Gastrocnemius medialis (tissue), 4 donors: ENCODE measurements at regions of chr11 and their contacts with region 1.

Region 1: DNA sequence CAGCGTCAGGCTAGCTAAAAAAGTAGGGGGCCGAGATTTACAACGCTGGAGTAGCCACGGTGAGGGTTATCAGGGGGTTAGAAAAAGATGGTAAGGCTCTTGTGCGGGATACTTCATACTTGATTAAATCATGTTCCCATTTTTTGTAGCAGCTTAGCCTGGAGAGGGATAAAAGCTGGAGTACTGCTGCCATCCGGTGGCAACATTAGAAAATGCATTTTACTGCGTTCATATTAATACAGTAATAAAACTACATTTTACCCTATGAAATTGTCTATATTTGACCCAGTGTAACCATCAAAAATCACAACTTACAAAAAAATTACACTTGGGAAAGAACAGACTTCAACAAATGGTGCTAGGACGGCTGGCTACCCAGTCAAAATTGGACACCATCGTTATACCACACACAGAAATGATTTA is 17.3 kb downstream of the RPUSD4 start:
- DNase-seq: no peak
- ATAC-seq: peak in 1 of 2 donors; percentile 21
- H3K4me3 ChIP-seq: no peak overlapping the region
- H3K27ac ChIP-seq: peak overlapping the region in 3 of 4 donors; percentile 36 to 93 (median 37)
- H3K4me1 ChIP-seq: peaks cover 48 to 64% of the 10 kb centered on the region in 2 donors
- H3K27me3 ChIP-seq: no peaks in the 10 kb centered on the region
- CTCF ChIP-seq: peak; percentile 62 to 73 (median 71)
- POLR2A ChIP-seq: no peak

Region 2: DNA sequence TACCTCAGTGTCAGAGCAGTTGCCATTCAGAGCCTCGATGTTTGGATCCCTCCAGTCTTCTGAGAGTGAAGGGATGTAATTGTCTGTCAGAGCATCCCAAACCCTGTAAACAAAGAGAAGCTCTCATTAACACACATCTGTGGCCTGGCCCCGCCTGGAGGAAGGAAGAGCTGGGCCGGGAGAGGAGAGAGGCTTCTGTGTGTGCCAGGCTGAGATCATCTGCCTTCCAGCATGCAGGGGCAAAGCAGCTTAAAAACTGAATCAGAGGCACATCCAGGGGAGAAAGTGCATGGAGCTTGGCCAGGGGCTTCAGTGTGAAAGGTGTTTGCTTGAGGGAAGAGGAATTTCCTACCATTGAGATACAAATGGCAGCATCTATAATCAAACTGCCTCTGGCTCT is 712.6 kb before region 1 on chr11:
- in situ Hi-C with region 1: no loop called
- intact Hi-C with region 1: no loop called
- DNase-seq: no peak
- ATAC-seq: no peak
- H3K4me3 ChIP-seq: no peak overlapping the region
- H3K27ac ChIP-seq: no peak overlapping the region
- H3K4me1 ChIP-seq: no peaks in the 10 kb centered on the region
- H3K27me3 ChIP-seq: no peaks in the 10 kb centered on the region
- CTCF ChIP-seq: no peak
- POLR2A ChIP-seq: no peak

Region 3: DNA sequence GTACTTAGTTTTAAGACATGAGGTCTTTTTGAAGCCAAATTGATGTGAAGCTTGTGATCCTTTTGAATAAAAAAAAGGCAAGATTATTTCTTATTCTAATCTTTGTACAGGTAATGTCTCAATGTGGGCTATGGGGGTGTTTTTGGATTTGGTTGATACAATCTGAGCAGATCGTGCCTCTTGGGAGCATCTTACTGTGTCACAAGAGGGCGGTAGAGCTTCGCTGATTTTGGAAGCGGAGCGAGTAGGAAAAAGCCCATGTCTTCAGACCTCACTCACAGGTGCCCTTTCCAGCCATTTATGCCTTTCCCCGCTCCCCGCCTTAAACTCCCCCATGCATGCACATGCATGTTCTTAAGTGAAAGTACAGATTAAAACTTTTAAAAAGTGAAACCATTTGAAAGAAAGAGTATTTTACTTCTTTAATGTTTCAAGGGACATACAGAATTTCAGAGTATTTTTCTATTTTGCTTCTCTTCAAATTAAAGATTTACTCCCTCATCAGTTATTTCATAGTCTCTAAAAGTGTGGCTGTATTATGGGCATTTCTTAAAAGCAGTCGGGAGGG is 271.0 kb before region 1 on chr11:
- in situ Hi-C with region 1: loop called in 3 of 4 experiments (anchors 5 kb)
- intact Hi-C with region 1: loop called (anchors 1 kb)
- DNase-seq: peak in 1 of 2 donors; percentile 44
- ATAC-seq: peak; percentile 91 to 93
- H3K4me3 ChIP-seq: no peak overlapping the region
- H3K27ac ChIP-seq: no peak overlapping the region
- H3K4me1 ChIP-seq: no peaks in the 10 kb centered on the region
- H3K27me3 ChIP-seq: peaks cover 0 to 3% (median 0%) of the 10 kb centered on the region in 3 donors
- CTCF ChIP-seq: peak; percentile 38 to 74 (median 64)
- POLR2A ChIP-seq: no peak

Region 4: DNA sequence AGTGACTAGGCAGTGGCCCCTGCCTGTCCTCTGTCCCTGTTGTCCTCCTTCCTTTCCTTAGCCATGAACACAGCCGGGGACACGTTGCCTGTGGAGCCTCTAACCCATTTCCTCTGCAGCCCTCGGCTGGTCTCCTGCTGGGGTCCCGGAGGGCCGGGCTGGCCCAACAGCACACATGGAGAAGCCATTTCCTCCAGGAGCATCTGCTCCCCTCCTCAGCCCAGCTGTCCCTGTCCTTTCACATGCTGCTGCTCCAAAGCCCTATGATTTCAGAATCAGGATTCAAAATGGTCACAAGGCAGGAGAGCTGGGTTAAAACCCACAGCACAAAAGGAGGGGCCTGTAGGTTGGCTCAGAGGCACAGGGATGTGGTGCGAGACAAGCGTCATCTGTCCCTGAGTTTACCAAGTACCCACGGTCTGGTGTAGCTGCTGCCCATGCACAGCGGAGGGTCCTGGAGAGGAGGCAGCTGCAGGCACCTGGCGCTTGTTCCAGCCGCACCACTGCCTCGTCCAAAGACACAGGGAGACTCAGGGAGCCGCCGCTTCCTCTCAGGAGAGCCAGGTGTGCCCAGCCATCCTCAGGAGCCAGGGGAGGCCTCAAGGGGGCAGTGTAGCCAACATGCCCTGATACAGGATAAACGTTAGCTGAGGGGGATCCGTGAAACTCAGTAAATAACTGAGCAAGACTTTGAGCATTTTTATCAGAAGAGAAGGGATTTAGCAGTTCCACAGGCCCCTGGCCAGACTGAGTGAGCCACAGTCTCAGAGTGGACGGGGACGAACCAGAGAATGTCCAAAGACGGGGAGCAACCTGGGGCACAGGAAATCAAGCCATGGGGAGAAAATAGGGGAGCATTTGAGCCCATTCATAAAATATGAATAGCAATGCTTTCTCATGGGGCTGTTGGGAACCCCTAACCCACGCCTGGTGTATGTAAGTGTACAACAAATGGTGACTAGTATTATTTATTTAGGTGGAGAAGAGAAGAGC is 252.2 kb before region 1 on chr11:
- in situ Hi-C with region 1: loop called in 1 of 4 experiments (anchors 10 kb)
- intact Hi-C with region 1: loop called (anchors 1 kb)
- DNase-seq: peak in 1 of 2 donors; percentile 26
- ATAC-seq: peak; percentile 25 to 62
- H3K4me3 ChIP-seq: peak overlapping the region in 1 of 4 donors; percentile 10
- H3K27ac ChIP-seq: peak overlapping the region in 2 of 4 donors; percentile 26 to 54
- H3K4me1 ChIP-seq: peaks cover 0 to 6% of the 10 kb centered on the region in 2 donors
- H3K27me3 ChIP-seq: no peaks in the 10 kb centered on the region
- CTCF ChIP-seq: peak in 4 of 5 experiments; percentile 28 to 76 (median 63)
- POLR2A ChIP-seq: no peak

Region 5: GRCh38 chr11:126062679-126063506 is 131.2 kb before region 1 on chr11 and contains the start of gene CDON:
- in situ Hi-C with region 1: loop called in 1 of 4 experiments (anchors 10 kb)
- intact Hi-C with region 1: loop called (anchors 2 kb)
- DNase-seq: peak; percentile 84 to 87
- ATAC-seq: peak; percentile 95 to 96
- H3K4me3 ChIP-seq: peak within 1 kb of the TSS; percentile 65 to 84 (median 74)
- H3K27ac ChIP-seq: peak within 1 kb of the TSS; percentile 64 to 83 (median 68)
- H3K4me1 ChIP-seq: peaks cover 9 to 11% of the 10 kb centered on the region in 2 donors
- H3K27me3 ChIP-seq: peaks cover 0 to 7% (median under 1%) of the 10 kb centered on the region in 3 donors
- CTCF ChIP-seq: peak in 1 of 5 experiments; percentile 25
- POLR2A ChIP-seq: peak in 1 of 2 donors; percentile 27
- total RNA-seq, gene CDON: 1.0 to 2.0 (median 1.8) TPM

Region 6: GRCh38 chr11:126519764-126520734 is 325.9 kb after region 1 on chr11:
- in situ Hi-C with region 1: no loop called
- intact Hi-C with region 1: no loop called
- DNase-seq: no peak
- ATAC-seq: no peak
- H3K4me3 ChIP-seq: no peak overlapping the region
- H3K27ac ChIP-seq: no peak overlapping the region
- H3K4me1 ChIP-seq: no peaks in the 10 kb centered on the region
- H3K27me3 ChIP-seq: no peaks in the 10 kb centered on the region
- CTCF ChIP-seq: no peak
- POLR2A ChIP-seq: no peak